ENCODE measurements at regions of chr4 and their contacts with region 1.

Region 1: DNA sequence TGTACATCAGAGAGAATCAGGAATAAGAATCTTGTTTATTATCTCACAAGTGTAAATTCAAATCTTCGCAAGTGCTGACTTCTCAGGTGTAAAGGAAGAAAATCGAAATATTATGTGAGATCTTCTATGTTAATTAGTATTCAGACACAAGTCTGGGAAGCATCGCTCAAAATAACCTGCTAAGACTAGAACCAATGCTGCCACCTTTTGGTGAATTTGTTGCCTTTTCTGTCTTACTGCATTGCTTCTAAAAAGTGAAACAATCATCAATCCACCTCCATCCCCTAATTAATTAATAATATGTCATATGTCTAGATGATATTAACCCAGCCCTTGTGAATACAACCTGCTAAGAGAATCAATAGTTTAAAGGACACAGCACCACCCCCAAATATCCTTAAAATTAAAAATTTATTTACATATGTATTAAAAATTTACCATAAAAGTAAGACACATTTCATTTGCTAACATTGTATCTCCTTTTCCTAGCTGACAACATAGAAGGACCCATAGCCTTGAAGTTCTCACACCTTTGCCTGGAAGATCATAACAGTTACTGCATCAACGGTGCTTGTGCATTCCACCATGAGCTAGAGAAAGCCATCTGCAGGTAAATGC is 3.5 kb downstream of the EPGN start:
- DNase-seq: peak; percentile 83
- H3K4me3 Mint-ChIP-seq: peak overlapping the region; percentile 47
- H3K27ac Mint-ChIP-seq: no peak overlapping the region
- H3K4me1 Mint-ChIP-seq: peaks cover 26% of the 10 kb centered on the region
- H3K27me3 Mint-ChIP-seq: no peaks in the 10 kb centered on the region
- CTCF ChIP-seq: peak; percentile 50

Region 2: GRCh38 chr4:73869130-73870050 is 442.4 kb before region 1 on chr4 and contains the start of gene CXCL1:
- CTCF ChIA-PET with region 1: no interaction called
- POLR2A ChIA-PET with region 1: interaction called, 4 read pairs
- intact Hi-C with region 1: loop called (anchors 5 kb)
- DNase-seq: peak; percentile 74
- H3K4me3 Mint-ChIP-seq: peak within 1 kb of the TSS; percentile 95
- H3K27ac Mint-ChIP-seq: peak within 1 kb of the TSS; percentile 92
- H3K4me1 Mint-ChIP-seq: peaks cover 37% of the 10 kb centered on the region
- H3K27me3 Mint-ChIP-seq: no peaks in the 10 kb centered on the region
- CTCF ChIP-seq: no peak
- total RNA-seq, gene CXCL1: 35.0 and 49.3 TPM in 2 replicates

Region 3: DNA sequence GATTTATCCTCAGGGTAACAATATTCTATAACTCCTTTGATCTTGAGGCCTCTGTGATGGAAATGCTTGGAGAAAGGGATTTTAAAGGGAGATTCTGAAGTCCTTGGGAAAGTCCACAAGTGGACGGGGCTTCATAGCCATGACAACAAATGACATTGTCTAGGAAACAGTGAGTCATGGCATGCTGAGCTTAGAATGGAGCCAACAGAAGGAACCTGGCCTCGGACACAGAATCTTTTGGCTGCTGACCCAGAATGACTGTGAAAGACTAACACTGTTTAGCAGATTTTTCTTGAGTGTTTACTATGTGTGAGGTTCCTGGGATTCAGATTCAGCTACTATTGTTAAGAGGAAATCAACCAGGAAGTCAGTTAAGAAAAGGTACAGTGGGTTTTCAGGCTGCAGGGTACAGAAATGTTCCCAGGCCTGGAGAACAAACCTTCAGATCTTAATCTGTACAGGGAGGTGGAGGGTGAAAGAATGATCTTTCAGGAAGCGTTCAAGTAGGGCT is 194.7 kb before region 1 on chr4:
- CTCF ChIA-PET with region 1: interaction called, 4 read pairs
- POLR2A ChIA-PET with region 1: interaction called, 28 read pairs
- intact Hi-C with region 1: loop called (anchors 5 kb)
- DNase-seq: peak; percentile 96
- H3K4me3 Mint-ChIP-seq: peak overlapping the region; percentile 88
- H3K27ac Mint-ChIP-seq: peak overlapping the region; percentile 99
- H3K4me1 Mint-ChIP-seq: peaks cover 44% of the 10 kb centered on the region
- H3K27me3 Mint-ChIP-seq: no peaks in the 10 kb centered on the region
- CTCF ChIP-seq: no peak

Region 4: GRCh38 chr4:74219240-74219639 is 92.6 kb before region 1 on chr4:
- CTCF ChIA-PET with region 1: interaction called, 7 read pairs
- POLR2A ChIA-PET with region 1: interaction called, 59 read pairs
- intact Hi-C with region 1: no loop called
- DNase-seq: peak; percentile 17
- H3K4me3 Mint-ChIP-seq: no peak overlapping the region
- H3K27ac Mint-ChIP-seq: peak overlapping the region; percentile 20
- H3K4me1 Mint-ChIP-seq: peaks cover 40% of the 10 kb centered on the region
- H3K27me3 Mint-ChIP-seq: no peaks in the 10 kb centered on the region
- CTCF ChIP-seq: no peak

Region 5: GRCh38 chr4:74267998-74268606 is 43.7 kb before region 1 on chr4:
- CTCF ChIA-PET with region 1: interaction called, 3 read pairs
- POLR2A ChIA-PET with region 1: interaction called, 39 read pairs
- intact Hi-C with region 1: no loop called
- DNase-seq: peak; percentile 85
- H3K4me3 Mint-ChIP-seq: no peak overlapping the region
- H3K27ac Mint-ChIP-seq: peak overlapping the region; percentile 59
- H3K4me1 Mint-ChIP-seq: peaks cover 27% of the 10 kb centered on the region
- H3K27me3 Mint-ChIP-seq: no peaks in the 10 kb centered on the region
- CTCF ChIP-seq: no peak